Naive thymus-derived CD4-positive, alpha-beta T cell (primary cell): ENCODE measurements at regions of chr11 and their contacts with region 1.

Region 1: GRCh38 chr11:57335343-57336110 is at the start of gene SSRP1:
- DNase-seq: peak; percentile 64 to 90 (median 85)
- ATAC-seq: peak; percentile 99
- H3K4me3 ChIP-seq: peak within 1 kb of the TSS; percentile 77
- H3K4me3 Mint-ChIP-seq: peak within 1 kb of the TSS; percentile 91 to 98 (median 96)
- H3K27ac ChIP-seq: peak within 1 kb of the TSS; percentile 91
- H3K27ac Mint-ChIP-seq: peak within 1 kb of the TSS; percentile 96 to 100 (median 99)
- H3K4me1 ChIP-seq: peaks cover 15 to 19% of the 10 kb centered on the region in 2 donors
- H3K4me1 Mint-ChIP-seq: peaks cover 18 to 44% (median 35%) of the 10 kb centered on the region in 7 donors
- H3K27me3 ChIP-seq: no peaks in the 10 kb centered on the region
- H3K27me3 Mint-ChIP-seq: peaks cover 0 to 2% (median 0%) of the 10 kb centered on the region in 5 donors
- total RNA-seq, gene SSRP1: 46.9 to 146 (median 70.1) TPM

Region 2: GRCh38 chr11:57426929-57427726 is 91.6 kb after region 1 on chr11 and contains the start of gene SLC43A3:
- CTCF ChIA-PET with region 1: no interaction called
- POLR2A ChIA-PET with region 1: interaction called, 3 read pairs
- intact Hi-C with region 1: loop called in 1 of 2 experiments (anchors 5 kb)
- DNase-seq: peak; percentile 18 to 79 (median 38)
- ATAC-seq: peak; percentile 63
- H3K4me3 ChIP-seq: peak within 1 kb of the TSS; percentile 56
- H3K4me3 Mint-ChIP-seq: peak within 1 kb of the TSS; percentile 83 to 92 (median 89)
- H3K27ac ChIP-seq: peak within 1 kb of the TSS; percentile 62
- H3K27ac Mint-ChIP-seq: peak within 1 kb of the TSS; percentile 52 to 93 (median 82)
- H3K4me1 ChIP-seq: peaks cover 24 to 36% of the 10 kb centered on the region in 2 donors
- H3K4me1 Mint-ChIP-seq: peaks cover 40 to 55% (median 50%) of the 10 kb centered on the region in 7 donors
- H3K27me3 ChIP-seq: no peaks in the 10 kb centered on the region
- H3K27me3 Mint-ChIP-seq: peaks cover 0 to 24% (median 0%) of the 10 kb centered on the region in 5 donors
- total RNA-seq, gene SLC43A3: 10.5 to 67.9 (median 12.2) TPM

Region 3: DNA sequence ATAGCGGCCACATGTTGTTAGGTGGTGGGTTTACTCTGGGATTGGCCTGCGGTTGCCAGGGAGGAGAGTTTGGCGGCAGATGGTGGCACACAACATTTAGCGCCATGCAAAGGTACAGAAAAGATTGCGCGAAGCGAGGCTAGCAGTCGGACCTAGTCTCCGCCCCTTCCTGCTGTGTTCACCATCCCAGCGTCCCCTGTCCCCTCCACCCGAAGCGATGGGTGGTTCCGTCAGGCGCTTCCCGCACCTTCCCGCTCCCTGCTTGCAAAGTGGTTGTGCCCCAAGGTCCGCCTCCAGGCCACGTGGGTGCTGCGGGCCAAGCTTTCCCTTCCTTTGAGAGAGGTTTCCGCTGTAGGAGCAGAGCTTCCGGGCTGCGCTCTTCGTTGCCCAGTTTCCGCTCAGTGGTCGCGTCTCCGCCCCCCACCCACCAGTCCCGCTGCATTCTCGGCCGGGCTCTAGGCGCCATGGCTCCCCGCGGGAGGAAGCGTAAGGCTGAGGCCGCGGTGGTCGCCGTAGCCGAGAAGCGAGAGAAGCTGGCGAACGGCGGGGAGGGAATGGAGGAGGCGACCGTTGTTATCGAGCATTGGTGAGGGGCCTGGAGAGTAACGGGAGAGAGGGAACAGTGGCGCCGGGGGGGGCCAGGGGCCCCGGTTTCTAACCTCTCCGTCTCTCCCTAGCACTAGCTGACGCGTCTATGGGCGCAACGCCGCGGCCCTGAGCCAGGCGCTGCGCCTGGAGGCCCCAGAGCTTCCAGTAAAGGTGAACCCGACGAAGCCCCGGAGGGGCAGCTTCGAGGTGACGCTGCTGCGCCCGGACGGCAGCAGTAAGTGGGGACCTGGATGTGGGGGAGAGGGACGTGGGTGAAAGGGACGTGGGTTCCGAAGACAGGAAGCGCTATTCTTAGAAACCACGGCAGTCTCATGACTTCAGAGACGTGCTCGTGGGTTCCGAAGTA is 405.9 kb after region 1 on chr11 and contains the start of gene SELENOH:
- CTCF ChIA-PET with region 1: no interaction called
- POLR2A ChIA-PET with region 1: interaction called, 3 read pairs
- intact Hi-C with region 1: loop called (anchors 1 kb)
- DNase-seq: peak; percentile 75 to 96 (median 91)
- ATAC-seq: peak; percentile 94
- H3K4me3 ChIP-seq: peak within 1 kb of the TSS; percentile 86
- H3K4me3 Mint-ChIP-seq: peak within 1 kb of the TSS; percentile 90 to 100 (median 99)
- H3K27ac ChIP-seq: peak within 1 kb of the TSS; percentile 93
- H3K27ac Mint-ChIP-seq: peak within 1 kb of the TSS; percentile 97 to 100 (median 98)
- H3K4me1 ChIP-seq: peaks cover 16 to 23% of the 10 kb centered on the region in 2 donors
- H3K4me1 Mint-ChIP-seq: peaks cover 12 to 50% (median 41%) of the 10 kb centered on the region in 7 donors
- H3K27me3 ChIP-seq: no peaks in the 10 kb centered on the region
- H3K27me3 Mint-ChIP-seq: no peaks in the 10 kb centered on the region
- total RNA-seq, gene SELENOH: 93.6 to 193 (median 124) TPM